Esophagus muscularis mucosa (tissue), 4 donors: ENCODE measurements at regions of chr16 and their contacts with region 1.

Region 1: GRCh38 chr16:48609652-48610029 is 339 bp downstream of the N4BP1 start:
- DNase-seq: no peak
- H3K4me3 ChIP-seq: peak overlapping the region; percentile 78 to 98 (median 90)
- H3K27ac ChIP-seq: peak overlapping the region; percentile 88 to 95 (median 94)
- H3K4me1 ChIP-seq: peaks cover 55 to 70% (median 59%) of the 10 kb centered on the region in 4 donors
- H3K27me3 ChIP-seq: no peaks in the 10 kb centered on the region
- CTCF ChIP-seq: no peak
- EP300 ChIP-seq: no peak
- POLR2A ChIP-seq: no peak

Region 2: DNA sequence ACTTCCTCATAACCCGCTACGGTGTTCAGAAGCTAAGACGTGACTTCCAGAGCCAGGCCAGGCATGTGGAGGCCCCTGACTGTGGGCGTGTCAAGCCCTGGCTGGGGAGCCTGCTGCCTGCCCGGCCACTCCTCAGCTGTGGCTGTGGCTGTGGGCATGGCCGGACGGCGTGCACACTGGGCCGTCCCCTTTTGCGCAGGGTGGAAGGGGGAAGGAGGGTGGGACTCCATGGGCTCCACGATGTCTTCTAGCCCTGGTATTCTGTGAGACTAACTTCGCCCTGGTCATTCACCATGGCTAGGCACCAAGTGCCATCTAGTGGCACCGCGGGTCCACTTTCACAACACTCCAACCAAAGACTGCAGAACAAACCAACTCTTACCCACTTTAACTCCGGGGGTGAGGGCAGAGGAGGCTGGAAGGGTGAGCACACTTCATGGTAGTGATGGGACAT is 67.6 kb before region 1 on chr16:
- intact Hi-C with region 1: no loop called
- DNase-seq: no peak
- H3K4me3 ChIP-seq: no peak overlapping the region
- H3K27ac ChIP-seq: peak overlapping the region in 1 of 4 donors; percentile 16
- H3K4me1 ChIP-seq: peaks cover 19 to 34% (median 22%) of the 10 kb centered on the region in 4 donors
- H3K27me3 ChIP-seq: no peaks in the 10 kb centered on the region
- CTCF ChIP-seq: peak; percentile 27 to 52 (median 41)
- EP300 ChIP-seq: no peak
- POLR2A ChIP-seq: no peak

Region 3: GRCh38 chr16:48556913-48557351 is 52.7 kb before region 1 on chr16:
- intact Hi-C with region 1: loop called (anchors 10 kb)
- DNase-seq: no peak
- H3K4me3 ChIP-seq: no peak overlapping the region
- H3K27ac ChIP-seq: peak overlapping the region in 1 of 4 donors; percentile 10
- H3K4me1 ChIP-seq: peaks cover 68 to 89% (median 83%) of the 10 kb centered on the region in 4 donors
- H3K27me3 ChIP-seq: no peaks in the 10 kb centered on the region
- CTCF ChIP-seq: no peak
- EP300 ChIP-seq: no peak
- POLR2A ChIP-seq: no peak

Region 4: DNA sequence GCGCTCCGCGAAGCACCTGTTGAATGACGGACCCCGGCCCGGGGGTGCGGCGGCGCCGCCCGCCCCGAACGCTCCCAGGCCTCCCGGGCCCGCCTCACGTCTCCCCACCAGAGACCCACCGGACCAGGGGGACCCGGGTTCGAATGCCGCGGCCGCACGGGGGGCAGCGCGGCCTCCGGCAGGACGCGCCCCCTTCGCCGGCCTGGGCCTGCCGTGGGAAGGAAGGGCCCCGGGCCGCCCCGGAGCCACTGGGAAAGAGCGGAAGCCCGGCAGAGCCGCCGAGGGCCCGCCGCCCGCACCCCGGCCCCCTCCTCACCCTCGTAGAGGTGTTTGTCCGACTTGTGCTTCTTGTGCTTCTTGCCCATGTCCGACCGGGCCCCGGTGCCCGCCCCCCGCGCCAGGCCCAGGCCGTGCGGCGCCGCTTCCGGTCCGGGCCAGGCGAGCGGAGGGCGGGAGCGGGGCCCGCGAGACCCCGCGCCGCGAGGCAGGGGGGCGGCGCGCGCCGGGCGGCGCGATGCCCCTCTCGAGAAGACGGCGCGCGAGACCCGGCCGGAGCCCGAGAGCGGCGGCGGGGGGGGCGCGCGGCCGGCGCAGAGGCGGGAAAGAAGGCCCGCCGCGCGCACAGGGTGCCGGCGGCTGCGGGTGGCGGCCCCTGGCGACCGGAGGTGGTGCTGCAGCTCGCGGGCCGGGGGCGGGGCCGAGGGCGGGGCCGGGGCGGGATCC is 1758.9 kb after region 1 on chr16 and contains the start of gene BRD7:
- intact Hi-C with region 1: no loop called
- DNase-seq: no peak
- H3K4me3 ChIP-seq: peak within 1 kb of the TSS; percentile 77 to 99 (median 98)
- H3K27ac ChIP-seq: peak within 1 kb of the TSS; percentile 77 to 85 (median 82)
- H3K4me1 ChIP-seq: peaks cover 30 to 68% (median 67%) of the 10 kb centered on the region in 4 donors
- H3K27me3 ChIP-seq: no peaks in the 10 kb centered on the region
- CTCF ChIP-seq: peak; percentile 48 to 81 (median 52)
- EP300 ChIP-seq: no peak
- POLR2A ChIP-seq: no peak
- total RNA-seq, gene BRD7: 49.5 to 68.1 (median 56.5) TPM